ENCODE measurements at regions of chr7 and their contacts with region 1.

Region 1: DNA sequence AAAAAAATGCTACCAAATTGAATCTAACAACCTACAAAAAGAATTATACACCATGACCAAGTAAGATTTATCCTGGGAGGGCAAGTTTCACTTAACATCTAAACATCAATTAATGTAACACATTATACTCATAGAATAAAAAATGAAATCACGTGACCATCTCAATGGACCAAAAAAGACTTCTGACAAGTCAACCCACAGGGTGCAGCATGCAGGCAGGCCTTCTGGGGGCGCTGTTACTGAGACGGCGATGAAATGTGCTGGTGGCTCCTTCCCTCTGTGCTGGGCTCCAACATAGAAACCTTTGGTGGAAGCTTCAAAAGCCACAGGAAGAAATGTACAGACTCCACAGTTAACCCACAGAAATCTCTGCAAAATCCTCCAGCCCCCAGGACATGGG is 103.1 kb downstream of the INHBA start:
- DNase-seq: no peak
- ATAC-seq: no peak
- H3K4me3 ChIP-seq: no peak overlapping the region
- H3K27ac ChIP-seq: no peak overlapping the region
- H3K4me1 ChIP-seq: no peaks in the 10 kb centered on the region
- H3K27me3 ChIP-seq: no peaks in the 10 kb centered on the region
- CTCF ChIP-seq: no peak

Region 2: DNA sequence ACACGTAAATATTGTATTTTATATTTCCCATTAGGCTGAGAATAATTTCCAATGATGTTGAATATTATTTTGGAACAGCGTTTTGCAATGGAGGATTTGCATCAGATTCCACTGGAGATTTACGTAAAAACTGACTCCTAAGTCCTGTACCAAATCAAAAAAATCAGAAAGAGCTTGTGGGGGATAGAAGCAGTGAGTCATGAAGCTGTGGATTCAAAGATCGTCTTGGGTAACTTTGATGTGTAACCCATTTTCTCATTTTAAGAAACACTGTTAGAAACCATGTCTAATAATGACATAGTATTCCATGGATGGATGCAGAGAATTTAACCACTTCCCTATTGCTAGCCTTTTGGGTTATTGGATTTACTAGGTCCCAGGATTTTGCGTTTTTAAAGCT is 55.5 kb before region 1 on chr7:
- intact Hi-C with region 1: loop called in 1 of 10 experiments (anchors 10 kb)
- DNase-seq: no peak
- ATAC-seq: no peak
- H3K4me3 ChIP-seq: no peak overlapping the region
- H3K27ac ChIP-seq: no peak overlapping the region
- H3K4me1 ChIP-seq: no peaks in the 10 kb centered on the region
- H3K27me3 ChIP-seq: no peaks in the 10 kb centered on the region
- CTCF ChIP-seq: no peak